Colonic mucosa (tissue), 4 donors: ENCODE measurements at regions of chr1 and their contacts with region 1.

Region 1: DNA sequence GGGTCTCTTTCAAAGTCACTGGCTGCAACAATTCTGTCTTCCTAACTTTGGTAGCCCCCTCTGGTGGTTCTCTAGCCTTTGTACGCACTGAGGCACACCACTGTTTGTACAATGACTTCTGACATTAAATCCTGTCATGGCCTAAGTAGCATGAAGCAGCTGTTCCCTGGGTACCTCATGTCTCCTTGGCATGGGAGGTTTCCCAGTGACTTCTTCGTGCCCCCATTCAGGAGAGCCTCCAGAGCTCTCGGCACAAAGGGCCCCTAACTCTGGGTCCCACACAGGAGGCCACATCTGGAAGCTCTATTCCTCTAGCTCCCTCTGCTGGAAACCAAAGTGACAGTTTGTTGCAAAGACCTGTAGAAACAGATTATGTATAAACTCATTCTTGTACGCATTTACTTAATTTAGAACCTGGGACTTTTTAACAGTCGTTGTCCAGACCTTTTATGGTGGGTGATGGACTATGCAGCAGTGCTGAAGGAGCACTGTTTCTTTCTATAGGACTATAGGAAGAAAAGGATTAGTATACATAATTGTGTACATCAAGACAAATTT is 13.4 kb downstream of the SWT1 start:
- DNase-seq: peak; percentile 41
- H3K4me3 ChIP-seq: no peak overlapping the region
- H3K27ac ChIP-seq: no peak overlapping the region
- H3K4me1 ChIP-seq: no peaks in the 10 kb centered on the region
- H3K27me3 ChIP-seq: no peaks in the 10 kb centered on the region
- CTCF ChIP-seq: peak; percentile 68

Region 2: DNA sequence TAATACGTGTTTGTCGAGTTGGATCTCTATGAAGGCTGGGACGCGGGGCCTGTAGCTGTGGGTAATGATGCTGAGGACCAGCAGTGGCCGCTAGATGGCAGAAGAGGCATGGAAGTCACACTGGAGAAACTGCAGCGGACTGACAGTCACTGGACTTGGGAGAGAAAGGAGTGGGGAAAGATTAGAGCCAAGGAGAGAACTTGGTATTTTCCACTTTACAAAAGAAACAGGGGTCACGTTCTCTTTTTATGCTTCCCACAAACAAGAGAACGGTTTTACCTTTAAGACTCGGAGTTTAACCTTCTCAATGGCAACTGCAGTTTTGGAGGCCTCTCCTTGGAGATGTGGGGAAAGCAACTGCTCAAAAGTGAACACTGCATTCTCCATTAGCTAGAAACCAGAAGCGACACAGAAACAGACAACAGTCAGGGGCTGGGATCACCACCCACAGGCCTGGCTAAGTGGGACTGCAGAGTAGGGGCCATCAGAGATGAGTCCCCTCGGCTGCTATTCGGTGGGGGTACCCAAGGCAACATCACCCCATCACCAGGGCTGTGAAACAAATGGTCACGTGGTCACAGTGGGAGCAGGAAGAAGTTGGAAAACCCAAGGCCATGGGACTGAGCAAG is 364.6 kb before region 1 on chr1:
- intact Hi-C with region 1: loop called (anchors 5 kb)
- DNase-seq: peak; percentile 93
- H3K4me3 ChIP-seq: no peak overlapping the region
- H3K27ac ChIP-seq: no peak overlapping the region
- H3K4me1 ChIP-seq: no peaks in the 10 kb centered on the region
- H3K27me3 ChIP-seq: no peaks in the 10 kb centered on the region
- CTCF ChIP-seq: peak; percentile 94

Region 3: GRCh38 chr1:184992271-184992670 is 178.1 kb before region 1 on chr1:
- intact Hi-C with region 1: loop called (anchors 5 kb)
- DNase-seq: no peak
- H3K4me3 ChIP-seq: no peak overlapping the region
- H3K27ac ChIP-seq: no peak overlapping the region
- H3K4me1 ChIP-seq: no peaks in the 10 kb centered on the region
- H3K27me3 ChIP-seq: no peaks in the 10 kb centered on the region
- CTCF ChIP-seq: no peak

Region 4: GRCh38 chr1:185534801-185535200 is 364.4 kb after region 1 on chr1:
- intact Hi-C with region 1: no loop called
- DNase-seq: no peak
- H3K4me3 ChIP-seq: no peak overlapping the region
- H3K27ac ChIP-seq: no peak overlapping the region
- H3K4me1 ChIP-seq: no peaks in the 10 kb centered on the region
- H3K27me3 ChIP-seq: no peaks in the 10 kb centered on the region
- CTCF ChIP-seq: no peak

Region 5: DNA sequence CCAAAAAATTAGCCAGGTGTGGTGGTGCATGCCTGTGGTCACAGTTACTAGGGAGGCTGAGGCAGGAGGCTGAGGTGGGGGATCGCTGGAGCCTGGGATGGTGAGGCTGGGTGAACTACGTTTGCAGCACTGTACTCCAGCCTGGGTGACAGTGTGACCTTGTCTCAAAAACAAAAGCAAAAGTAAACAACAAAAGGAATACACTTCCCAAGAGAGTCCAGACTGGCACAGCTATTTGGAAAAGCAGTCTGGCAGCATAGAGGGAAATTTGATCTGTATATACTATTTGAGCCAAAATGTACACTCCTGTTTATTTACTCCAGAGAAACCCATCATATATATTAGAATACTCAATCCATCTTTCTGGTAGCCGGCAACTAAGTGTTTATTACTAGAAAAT is 456.8 kb after region 1 on chr1:
- intact Hi-C with region 1: no loop called
- DNase-seq: no peak
- H3K4me3 ChIP-seq: no peak overlapping the region
- H3K27ac ChIP-seq: no peak overlapping the region
- H3K4me1 ChIP-seq: no peaks in the 10 kb centered on the region
- H3K27me3 ChIP-seq: no peaks in the 10 kb centered on the region
- CTCF ChIP-seq: no peak